Transverse colon (tissue), 4 donors: ENCODE measurements at regions of chr3 and their contacts with region 1.

Region 1: DNA sequence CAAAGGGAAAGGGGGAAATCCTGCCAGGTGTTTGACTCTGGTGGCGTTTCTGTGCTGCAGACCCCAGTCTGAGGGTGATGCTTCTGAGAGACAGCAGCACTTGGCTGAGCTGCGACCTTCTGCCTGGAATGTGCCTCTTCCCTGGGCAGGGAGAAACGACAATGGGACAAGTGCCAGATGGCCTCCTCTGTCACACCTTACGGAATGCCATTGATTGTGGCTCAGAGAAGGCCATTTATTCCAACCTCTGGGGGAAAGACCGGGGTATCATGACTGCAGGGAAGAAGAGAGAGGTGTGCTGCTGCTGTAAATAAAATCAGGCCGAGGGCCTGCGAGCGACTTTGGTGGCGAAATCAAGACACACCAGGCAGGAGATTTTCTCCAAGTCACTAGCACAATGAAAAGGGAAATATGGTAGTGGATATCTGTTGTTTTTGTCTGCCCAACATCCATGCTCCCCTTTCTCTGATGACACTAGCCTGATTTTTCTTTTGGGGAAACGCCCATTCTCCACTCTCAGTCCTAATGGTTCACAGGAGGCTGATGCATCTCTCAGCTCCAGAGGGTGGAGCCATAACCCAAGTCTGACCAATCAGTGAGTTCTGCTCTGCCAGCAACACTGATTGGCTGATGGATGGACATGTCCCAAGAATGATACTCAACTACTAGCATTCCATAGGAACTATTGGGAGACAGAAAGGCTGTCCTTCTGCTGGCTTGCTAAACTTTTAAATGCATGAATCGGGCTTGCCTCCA is 336.1 kb downstream of the FOXP1 start:
- DNase-seq: no peak
- H3K4me3 ChIP-seq: no peak overlapping the region
- H3K27ac ChIP-seq: peak overlapping the region in 3 of 4 donors; percentile 12 to 52 (median 41)
- H3K4me1 ChIP-seq: peaks cover 0 to 10% (median 7%) of the 10 kb centered on the region in 4 donors
- H3K27me3 ChIP-seq: no peaks in the 10 kb centered on the region
- CTCF ChIP-seq: no peak
- EP300 ChIP-seq: no peak
- POLR2A ChIP-seq: no peak

Region 2: GRCh38 chr3:71069797-71070196 is 177.6 kb before region 1 on chr3:
- in situ Hi-C with region 1: no loop called
- intact Hi-C with region 1: loop called (anchors 5 kb)
- DNase-seq: peak; percentile 76
- H3K4me3 ChIP-seq: no peak overlapping the region
- H3K27ac ChIP-seq: peak overlapping the region; percentile 65 to 98 (median 94)
- H3K4me1 ChIP-seq: peaks cover 22 to 76% (median 36%) of the 10 kb centered on the region in 4 donors
- H3K27me3 ChIP-seq: no peaks in the 10 kb centered on the region
- CTCF ChIP-seq: peak; percentile 42 to 65 (median 54)
- EP300 ChIP-seq: no peak
- POLR2A ChIP-seq: no peak

Region 3: GRCh38 chr3:71130471-71131374 is 116.7 kb before region 1 on chr3:
- in situ Hi-C with region 1: no loop called
- intact Hi-C with region 1: loop called (anchors 10 kb)
- DNase-seq: peak; percentile 79
- H3K4me3 ChIP-seq: peak overlapping the region; percentile 21 to 64 (median 45)
- H3K27ac ChIP-seq: peak overlapping the region; percentile 86 to 94 (median 93)
- H3K4me1 ChIP-seq: peaks cover 33 to 89% (median 64%) of the 10 kb centered on the region in 4 donors
- H3K27me3 ChIP-seq: no peaks in the 10 kb centered on the region
- CTCF ChIP-seq: no peak
- EP300 ChIP-seq: no peak
- POLR2A ChIP-seq: peak; percentile 85